ENCODE measurements at regions of chr1 and their contacts with region 1.

Region 1: DNA sequence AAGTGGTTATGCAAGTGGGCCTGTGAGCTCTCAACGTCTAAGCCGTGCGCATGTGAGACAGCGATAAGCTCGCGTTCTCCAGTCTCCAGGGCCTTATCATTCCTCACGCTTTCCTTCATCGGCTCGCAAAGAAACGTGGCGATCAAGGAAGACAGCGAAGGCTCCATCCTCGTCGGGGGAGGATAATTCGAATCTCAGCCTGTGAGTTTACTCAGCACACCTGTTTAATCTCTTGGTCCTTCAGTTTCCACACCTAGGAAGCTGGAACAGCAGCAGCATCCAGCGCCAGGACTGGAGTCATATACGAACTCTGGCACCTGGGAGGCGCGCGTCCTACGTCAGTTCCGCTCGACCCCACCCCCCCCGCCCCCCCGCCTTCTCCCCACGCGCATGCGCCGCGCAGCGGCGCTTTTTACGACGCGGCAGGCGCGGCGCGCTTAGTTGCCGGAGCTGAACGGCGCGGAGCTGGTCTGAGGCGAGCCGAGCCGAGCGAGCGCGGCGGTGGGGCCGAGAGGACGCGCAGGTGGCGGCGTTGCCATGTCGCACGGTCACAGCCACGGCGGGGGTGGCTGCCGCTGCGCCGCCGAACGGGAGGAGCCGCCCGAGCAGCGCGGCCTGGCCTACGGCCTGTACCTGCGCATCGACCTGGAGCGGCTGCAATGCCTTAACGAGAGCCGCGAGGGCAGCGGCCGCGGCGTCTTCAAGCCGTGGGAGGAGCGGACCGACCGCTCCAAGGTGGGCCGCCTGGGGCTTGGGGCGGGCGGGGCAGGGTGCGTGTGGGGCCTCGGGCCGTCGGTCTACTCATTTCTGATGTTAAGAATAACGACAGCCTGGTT is at the start of gene PITHD1:
- DNase-seq: peak; percentile 84 to 92 (median 92)
- ATAC-seq: peak; percentile 88 to 90
- H3K4me3 ChIP-seq: peak within 1 kb of the TSS; percentile 60
- H3K27ac ChIP-seq: peak within 1 kb of the TSS; percentile 91
- H3K4me1 ChIP-seq: peaks cover 3% of the 10 kb centered on the region
- H3K27me3 ChIP-seq: no peaks in the 10 kb centered on the region
- total RNA-seq, gene PITHD1: 35.5 to 40.3 (median 38.8) TPM

Region 2: GRCh38 chr1:23916209-23917131 is 138.3 kb after region 1 on chr1:
- intact Hi-C with region 1: loop called in 2 of 4 experiments (anchors 10 kb)
- DNase-seq: peak; percentile 57 to 79 (median 72)
- ATAC-seq: peak; percentile 82 to 86
- H3K4me3 ChIP-seq: no peak overlapping the region
- H3K27ac ChIP-seq: no peak overlapping the region
- H3K4me1 ChIP-seq: no peaks in the 10 kb centered on the region
- H3K27me3 ChIP-seq: no peaks in the 10 kb centered on the region

Measured in right cardiac atrium (tissue), 5 donors.